AG04449 (cell line): ENCODE measurements at regions of chr1 and their contacts with region 1.

Region 1: DNA sequence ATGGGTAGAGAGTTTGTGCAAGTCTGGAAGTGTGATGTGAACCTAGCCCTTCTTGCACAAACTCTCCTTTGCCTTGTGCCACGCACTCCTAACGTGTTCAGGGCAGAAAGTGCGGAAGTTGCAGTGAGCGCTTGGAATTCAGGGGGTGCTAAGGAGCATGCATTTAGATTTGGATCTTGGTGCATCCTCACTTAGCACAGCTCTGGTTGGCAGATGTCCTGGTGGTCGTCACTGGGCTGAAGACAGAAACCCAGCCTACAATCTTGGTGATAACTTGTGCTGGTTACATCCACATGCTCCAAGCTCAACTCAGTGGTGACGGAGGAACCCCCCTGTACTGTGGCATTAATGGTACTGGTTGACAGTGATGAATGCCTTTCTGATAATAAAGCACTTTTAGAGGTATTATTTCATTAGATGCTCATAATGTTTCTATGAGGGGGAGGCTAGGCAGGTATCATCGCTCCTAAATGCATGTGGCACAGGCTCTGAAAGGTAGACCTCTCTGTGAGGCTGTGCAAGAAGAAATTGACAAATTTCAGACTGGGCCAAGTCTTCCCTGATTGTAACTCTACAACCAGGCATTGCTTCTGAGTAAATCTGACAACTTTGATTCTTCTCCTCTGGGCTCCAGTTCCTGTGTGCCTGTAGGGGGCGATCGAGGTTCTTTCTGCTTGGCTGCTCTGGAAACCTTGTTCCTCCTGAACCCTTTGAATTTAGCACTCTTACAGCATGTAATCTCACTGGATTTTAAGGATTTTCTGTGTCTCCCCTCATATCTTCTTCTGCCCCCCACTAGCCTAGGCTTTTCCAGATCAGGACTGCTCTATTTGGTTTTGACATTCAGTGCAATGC is 40.6 kb downstream of the MAPKAPK2 start:
- DNase-seq: no peak
- H3K4me3 ChIP-seq: no peak overlapping the region
- CTCF ChIP-seq: peak; percentile 74

Region 2: DNA sequence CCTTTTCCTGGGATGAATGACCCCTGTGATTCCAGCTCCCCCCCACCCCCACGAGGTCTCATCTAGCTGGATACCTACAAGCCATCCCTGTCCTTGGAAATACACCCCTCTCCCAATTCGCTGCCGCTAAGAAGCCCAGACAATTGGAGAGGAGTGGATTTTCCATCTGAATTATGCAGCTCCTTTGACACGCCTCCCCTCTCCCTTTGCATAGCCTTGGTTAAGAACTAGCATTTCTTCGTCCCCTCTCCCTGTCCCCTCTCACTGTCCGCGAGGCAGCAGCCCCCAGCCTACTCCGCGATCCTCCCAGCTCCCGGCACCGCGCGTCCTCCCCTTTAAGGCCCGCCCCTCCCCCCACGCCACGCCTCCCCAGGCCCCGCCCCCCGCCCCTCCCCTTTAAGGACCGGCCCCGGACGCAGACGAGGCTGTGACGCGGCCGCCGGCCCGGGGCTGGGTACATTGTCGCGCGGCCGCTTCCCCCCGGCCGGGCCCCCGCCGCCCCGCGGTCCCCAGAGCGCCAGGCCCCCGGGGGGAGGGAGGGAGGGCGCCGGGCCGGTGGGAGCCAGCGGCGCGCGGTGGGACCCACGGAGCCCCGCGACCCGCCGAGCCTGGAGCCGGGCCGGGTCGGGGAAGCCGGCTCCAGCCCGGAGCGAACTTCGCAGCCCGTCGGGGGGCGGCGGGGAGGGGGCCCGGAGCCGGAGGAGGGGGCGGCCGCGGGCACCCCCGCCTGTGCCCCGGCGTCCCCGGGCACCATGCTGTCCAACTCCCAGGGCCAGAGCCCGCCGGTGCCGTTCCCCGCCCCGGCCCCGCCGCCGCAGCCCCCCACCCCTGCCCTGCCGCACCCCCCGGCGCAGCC is 40.6 kb before region 1 on chr1 and contains the start of gene MAPKAPK2:
- CTCF ChIA-PET with region 1: interaction called, 18 read pairs
- POLR2A ChIA-PET with region 1: no interaction called
- DNase-seq: no peak
- H3K4me3 ChIP-seq: peak within 1 kb of the TSS; percentile 81
- CTCF ChIP-seq: no peak

Region 3: GRCh38 chr1:206700445-206701036 is 24.8 kb before region 1 on chr1:
- CTCF ChIA-PET with region 1: interaction called, 25 read pairs
- POLR2A ChIA-PET with region 1: no interaction called
- DNase-seq: no peak
- H3K4me3 ChIP-seq: no peak overlapping the region
- CTCF ChIP-seq: no peak

Region 4: DNA sequence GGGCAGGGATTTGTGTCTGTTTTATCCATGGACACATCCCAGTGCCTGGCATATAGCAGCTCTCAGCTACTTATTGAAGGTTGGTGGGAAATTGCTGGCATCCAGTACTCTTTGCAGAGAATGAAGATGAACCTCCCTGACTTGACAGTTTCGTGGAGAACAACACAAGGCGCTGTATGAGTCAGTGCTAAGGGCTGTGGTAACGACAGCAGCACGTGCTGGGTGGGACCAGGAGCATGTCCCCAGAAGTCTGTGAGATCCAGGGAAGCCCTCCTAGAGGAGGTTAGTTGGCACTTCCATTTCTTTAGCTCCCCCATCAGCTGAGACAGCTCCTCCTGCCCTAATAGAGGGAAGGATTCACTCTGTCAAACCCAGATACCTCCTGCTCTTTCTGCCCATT is 19.3 kb after region 1 on chr1:
- CTCF ChIA-PET with region 1: interaction called, 42 read pairs
- POLR2A ChIA-PET with region 1: no interaction called
- DNase-seq: no peak
- H3K4me3 ChIP-seq: no peak overlapping the region
- CTCF ChIP-seq: no peak

Region 5: GRCh38 chr1:206786212-206786886 is 61.0 kb after region 1 on chr1:
- CTCF ChIA-PET with region 1: interaction called, 17 read pairs
- POLR2A ChIA-PET with region 1: no interaction called
- DNase-seq: no peak
- H3K4me3 ChIP-seq: no peak overlapping the region
- CTCF ChIP-seq: no peak

Region 6: DNA sequence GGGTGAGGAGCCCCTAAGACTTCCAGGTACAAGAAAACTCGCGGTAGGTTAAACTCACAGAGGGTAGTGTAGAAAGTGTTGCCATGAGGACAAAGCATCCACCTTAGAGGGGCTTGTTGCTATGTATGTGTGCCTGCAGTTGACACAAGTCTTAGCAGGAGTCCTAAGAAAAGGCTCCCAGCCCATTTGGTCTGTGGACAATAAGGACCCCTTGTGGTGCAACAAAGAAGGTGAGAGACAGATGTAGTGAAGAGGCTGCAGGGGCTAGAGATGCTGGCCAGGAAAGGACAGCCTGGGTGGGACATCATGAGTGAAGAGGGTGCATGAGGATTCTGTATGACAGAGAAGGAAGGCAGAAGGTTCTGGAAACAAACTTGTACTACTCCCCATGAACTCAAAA is 83.3 kb after region 1 on chr1:
- CTCF ChIA-PET with region 1: interaction called, 89 read pairs
- POLR2A ChIA-PET with region 1: no interaction called
- DNase-seq: no peak
- H3K4me3 ChIP-seq: no peak overlapping the region
- CTCF ChIP-seq: peak; percentile 49